ENCODE measurements at regions of chr14 and their contacts with region 1.

Region 1: DNA sequence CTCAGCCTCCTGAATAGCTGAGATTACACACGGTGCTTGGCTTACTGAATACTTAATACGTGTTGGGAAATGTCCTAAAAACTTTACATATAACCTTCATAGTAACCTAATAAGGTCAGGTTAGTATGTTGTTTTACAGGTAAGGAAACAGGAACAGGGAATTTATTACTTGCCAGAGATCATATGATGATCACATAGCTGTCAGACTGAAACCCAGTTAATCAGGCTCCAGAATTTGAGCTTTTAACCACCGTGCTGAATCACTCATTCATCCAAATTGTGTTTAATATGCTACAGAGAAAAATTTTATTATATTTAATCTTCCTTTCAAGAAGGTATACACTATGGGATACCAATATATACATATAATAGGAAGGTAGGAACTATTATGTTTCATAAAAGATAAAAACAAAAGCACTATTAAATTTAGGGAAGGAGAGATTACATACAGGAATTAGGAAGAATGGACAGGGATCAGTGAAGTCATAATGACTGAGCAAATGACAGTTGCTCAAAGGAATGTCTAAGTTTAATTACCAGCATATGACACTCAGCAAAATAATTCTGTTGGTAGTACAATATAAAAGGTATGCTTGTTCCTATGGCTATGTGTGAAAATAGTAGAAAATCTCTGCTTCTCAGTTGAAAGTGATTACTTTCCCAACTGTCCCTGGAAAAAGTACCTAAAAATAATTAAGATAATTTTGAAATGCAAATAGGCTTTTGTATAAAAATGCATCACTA is 59.3 kb downstream of the HEATR5A start:
- DNase-seq: no peak
- ATAC-seq: no peak
- H3K4me3 ChIP-seq: no peak overlapping the region
- H3K27ac ChIP-seq: no peak overlapping the region
- H3K4me1 ChIP-seq: peaks cover 8% of the 10 kb centered on the region
- H3K27me3 ChIP-seq: no peaks in the 10 kb centered on the region
- CTCF ChIP-seq: no peak
- EP300 ChIP-seq: no peak
- POLR2A ChIP-seq: no peak
- RAD21 ChIP-seq: no peak

Region 2: DNA sequence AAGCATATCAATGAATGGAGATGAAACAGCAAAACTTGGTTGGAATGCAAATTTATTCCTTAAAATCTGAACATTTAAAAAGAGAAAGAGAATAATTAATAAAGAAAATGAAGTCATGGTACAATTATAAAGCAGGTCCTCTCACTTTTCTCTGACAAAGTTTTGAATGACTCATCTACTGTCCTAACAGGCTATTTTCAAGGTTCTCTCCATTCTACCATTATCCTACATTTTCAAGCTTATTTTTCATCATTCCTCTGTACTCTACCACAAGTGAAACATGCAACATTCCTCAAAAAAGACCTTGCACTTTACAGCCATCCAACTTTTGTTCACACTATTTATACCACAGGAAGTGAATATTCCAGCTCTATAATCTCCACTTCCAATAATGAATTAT is 372.6 kb before region 1 on chr14:
- CTCF ChIA-PET with region 1: no interaction called
- POLR2A ChIA-PET with region 1: no interaction called
- in situ Hi-C with region 1: no loop called
- intact Hi-C with region 1: loop called (anchors 10 kb)
- DNase-seq: peak; percentile 49
- ATAC-seq: peak; percentile 63
- H3K4me3 ChIP-seq: no peak overlapping the region
- H3K27ac ChIP-seq: peak overlapping the region; percentile 30
- H3K4me1 ChIP-seq: peaks cover 31% of the 10 kb centered on the region
- H3K27me3 ChIP-seq: no peaks in the 10 kb centered on the region
- CTCF ChIP-seq: no peak
- EP300 ChIP-seq: no peak
- POLR2A ChIP-seq: no peak
- RAD21 ChIP-seq: no peak

Region 3: GRCh38 chr14:31137214-31137889 is 223.7 kb before region 1 on chr14:
- CTCF ChIA-PET with region 1: no interaction called
- POLR2A ChIA-PET with region 1: no interaction called
- in situ Hi-C with region 1: no loop called
- intact Hi-C with region 1: loop called (anchors 5 kb)
- DNase-seq: no peak
- ATAC-seq: peak; percentile 37
- H3K4me3 ChIP-seq: no peak overlapping the region
- H3K27ac ChIP-seq: no peak overlapping the region
- H3K4me1 ChIP-seq: no peaks in the 10 kb centered on the region
- H3K27me3 ChIP-seq: no peaks in the 10 kb centered on the region
- CTCF ChIP-seq: no peak
- EP300 ChIP-seq: no peak
- POLR2A ChIP-seq: no peak
- RAD21 ChIP-seq: no peak

Region 4: GRCh38 chr14:31166271-31166710 is 194.8 kb before region 1 on chr14:
- CTCF ChIA-PET with region 1: no interaction called
- POLR2A ChIA-PET with region 1: no interaction called
- in situ Hi-C with region 1: no loop called
- intact Hi-C with region 1: loop called (anchors 2 kb)
- DNase-seq: no peak
- ATAC-seq: no peak; the same call in 2 of the 3 replicates
- H3K4me3 ChIP-seq: no peak overlapping the region
- H3K27ac ChIP-seq: no peak overlapping the region
- H3K4me1 ChIP-seq: peaks cover 37% of the 10 kb centered on the region
- H3K27me3 ChIP-seq: no peaks in the 10 kb centered on the region
- CTCF ChIP-seq: no peak
- EP300 ChIP-seq: no peak
- POLR2A ChIP-seq: no peak
- RAD21 ChIP-seq: no peak

Region 5: DNA sequence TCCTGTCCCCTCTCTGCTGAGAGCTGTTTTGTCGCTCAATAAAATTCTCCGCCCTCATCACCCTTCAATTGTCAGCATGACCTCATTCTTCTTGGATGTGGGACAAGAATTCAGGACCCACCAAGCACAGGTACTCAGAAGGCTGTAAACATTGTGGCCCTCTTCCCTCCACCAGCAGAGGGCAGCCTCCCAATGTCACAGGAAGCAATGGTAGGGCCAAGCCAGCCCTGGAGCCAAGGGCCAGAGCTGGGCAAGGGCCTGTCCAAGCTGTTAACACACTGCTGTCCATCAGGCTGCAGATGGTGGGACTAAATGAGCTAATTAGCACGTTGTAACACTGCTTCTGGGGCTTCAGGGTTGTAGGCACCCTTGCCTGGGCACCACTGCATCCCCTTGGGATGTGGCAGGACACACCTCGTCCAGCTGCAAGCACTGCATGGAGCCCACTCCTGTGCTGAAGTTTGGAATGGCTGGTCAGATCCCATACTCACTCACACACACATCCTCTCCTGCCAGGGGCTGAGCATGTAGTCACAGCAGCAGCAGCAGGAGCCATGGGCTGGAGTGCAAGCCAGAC is 90.8 kb before region 1 on chr14:
- CTCF ChIA-PET with region 1: interaction called, 16 read pairs
- POLR2A ChIA-PET with region 1: no interaction called
- in situ Hi-C with region 1: no loop called
- intact Hi-C with region 1: loop called (anchors 1 kb)
- DNase-seq: peak; percentile 77
- ATAC-seq: peak; percentile 73
- H3K4me3 ChIP-seq: no peak overlapping the region
- H3K27ac ChIP-seq: no peak overlapping the region
- H3K4me1 ChIP-seq: peaks cover 66% of the 10 kb centered on the region
- H3K27me3 ChIP-seq: no peaks in the 10 kb centered on the region
- CTCF ChIP-seq: peak; percentile 94
- EP300 ChIP-seq: no peak
- POLR2A ChIP-seq: no peak
- RAD21 ChIP-seq: peak; percentile 53

Region 6: DNA sequence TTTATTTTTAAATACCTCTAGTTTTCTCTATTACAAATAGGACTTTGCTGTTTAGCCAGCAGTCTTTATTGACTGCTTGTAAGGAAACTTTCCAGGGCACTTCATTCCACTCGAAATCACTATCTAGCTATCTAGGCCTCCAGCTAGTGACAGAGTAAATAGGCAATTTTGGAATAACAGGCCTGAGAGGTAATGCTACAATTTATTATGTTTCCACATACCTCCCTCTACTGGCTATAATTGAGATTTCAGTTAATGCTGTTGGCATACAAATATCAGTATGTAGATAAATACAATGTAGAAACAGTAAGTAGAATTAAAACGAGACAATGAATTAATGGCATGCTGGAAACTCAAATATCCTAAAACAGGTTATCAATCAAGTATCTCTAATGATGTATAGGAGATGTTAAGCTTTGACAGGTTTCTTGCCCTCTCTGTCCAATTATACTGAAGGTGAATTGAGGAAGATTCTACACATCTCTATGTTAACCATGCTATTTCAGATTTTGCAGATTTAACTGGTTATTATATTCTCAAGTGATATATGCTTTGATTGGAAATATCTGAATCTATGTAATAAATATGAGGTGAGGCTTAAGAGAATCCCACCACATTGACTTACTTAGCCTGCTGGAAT is 89.0 kb after region 1 on chr14:
- CTCF ChIA-PET with region 1: no interaction called
- POLR2A ChIA-PET with region 1: no interaction called
- in situ Hi-C with region 1: no loop called
- intact Hi-C with region 1: no loop called
- DNase-seq: peak; percentile 68
- ATAC-seq: peak; percentile 94
- H3K4me3 ChIP-seq: no peak overlapping the region
- H3K27ac ChIP-seq: no peak overlapping the region
- H3K4me1 ChIP-seq: no peaks in the 10 kb centered on the region
- H3K27me3 ChIP-seq: no peaks in the 10 kb centered on the region
- CTCF ChIP-seq: peak; percentile 75
- EP300 ChIP-seq: no peak
- POLR2A ChIP-seq: no peak
- RAD21 ChIP-seq: peak; percentile 74